ENCODE measurements at regions of chr20 and their contacts with region 1.

Region 1: GRCh38 chr20:35954200-35954906 is at the start of gene SCAND1:
- DNase-seq: peak; percentile 94
- ATAC-seq: peak; percentile 86
- H3K4me3 Mint-ChIP-seq: peak within 1 kb of the TSS; percentile 100
- H3K27ac Mint-ChIP-seq: peak within 1 kb of the TSS; percentile 100
- H3K4me1 Mint-ChIP-seq: peaks cover 22% of the 10 kb centered on the region
- H3K27me3 Mint-ChIP-seq: no peaks in the 10 kb centered on the region
- CTCF ChIP-seq: peak; percentile 48
- total RNA-seq, gene SCAND1: 35.9 and 43.2 TPM in 2 replicates

Region 2: GRCh38 chr20:34876162-34877001 is 1078.0 kb before region 1 on chr20 and contains the start of gene ACSS2:
- CTCF ChIA-PET with region 1: no interaction called
- POLR2A ChIA-PET with region 1: interaction called, 3 read pairs
- intact Hi-C with region 1: loop called (anchors 10 kb)
- DNase-seq: peak; percentile 96
- ATAC-seq: peak; percentile 86
- H3K4me3 Mint-ChIP-seq: peak within 1 kb of the TSS; percentile 86
- H3K27ac Mint-ChIP-seq: peak within 1 kb of the TSS; percentile 25
- H3K4me1 Mint-ChIP-seq: peaks cover 51% of the 10 kb centered on the region
- H3K27me3 Mint-ChIP-seq: no peaks in the 10 kb centered on the region
- CTCF ChIP-seq: no peak
- total RNA-seq, gene ACSS2: 8.4 and 11.3 TPM in 2 replicates

Region 3: GRCh38 chr20:35463455-35464300 is 490.7 kb before region 1 on chr20:
- CTCF ChIA-PET with region 1: interaction called, 3 read pairs
- POLR2A ChIA-PET with region 1: no interaction called
- intact Hi-C with region 1: loop called (anchors 2 kb)
- DNase-seq: no peak
- ATAC-seq: peak; percentile 84
- H3K4me3 Mint-ChIP-seq: no peak overlapping the region
- H3K27ac Mint-ChIP-seq: no peak overlapping the region
- H3K4me1 Mint-ChIP-seq: peaks cover 13% of the 10 kb centered on the region
- H3K27me3 Mint-ChIP-seq: no peaks in the 10 kb centered on the region
- CTCF ChIP-seq: no peak

Region 4: GRCh38 chr20:35741892-35742740 is 212.2 kb before region 1 on chr20 and contains the start of gene RBM39:
- CTCF ChIA-PET with region 1: interaction called, 6 read pairs
- POLR2A ChIA-PET with region 1: interaction called, 104 read pairs
- intact Hi-C with region 1: loop called (anchors 1 kb)
- DNase-seq: peak; percentile 94
- ATAC-seq: peak; percentile 81
- H3K4me3 Mint-ChIP-seq: peak within 1 kb of the TSS; percentile 99
- H3K27ac Mint-ChIP-seq: peak within 1 kb of the TSS; percentile 99
- H3K4me1 Mint-ChIP-seq: peaks cover 46% of the 10 kb centered on the region
- H3K27me3 Mint-ChIP-seq: no peaks in the 10 kb centered on the region
- CTCF ChIP-seq: no peak
- total RNA-seq, gene RBM39: 432 and 483 TPM in 2 replicates

Region 5: DNA sequence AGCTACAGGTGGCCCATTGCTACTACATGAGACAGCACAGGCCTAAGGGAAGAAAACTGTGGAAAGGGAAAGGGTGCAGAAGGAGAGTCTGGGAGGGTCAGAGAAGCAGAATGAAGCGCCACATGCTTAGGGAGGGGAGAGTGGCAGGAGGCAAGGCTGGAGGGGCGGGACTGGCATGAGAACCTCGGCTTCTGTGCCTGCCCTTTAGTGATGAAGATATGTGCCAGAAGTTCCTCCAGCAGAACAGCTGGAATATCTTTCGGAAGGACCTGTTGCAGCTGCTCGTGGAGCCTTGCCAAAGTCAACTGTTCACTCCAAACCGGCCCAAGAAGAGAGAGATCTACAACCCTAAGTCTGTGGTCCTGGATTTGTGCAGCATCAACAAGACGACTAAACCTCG is 75.8 kb after region 1 on chr20:
- CTCF ChIA-PET with region 1: no interaction called
- POLR2A ChIA-PET with region 1: no interaction called
- intact Hi-C with region 1: no loop called
- DNase-seq: no peak
- ATAC-seq: no peak
- H3K4me3 Mint-ChIP-seq: no peak overlapping the region
- H3K27ac Mint-ChIP-seq: no peak overlapping the region
- H3K4me1 Mint-ChIP-seq: no peaks in the 10 kb centered on the region
- H3K27me3 Mint-ChIP-seq: peaks cover 2% of the 10 kb centered on the region
- CTCF ChIP-seq: no peak

Region 6: GRCh38 chr20:36050436-36051317 is 96.3 kb after region 1 on chr20:
- CTCF ChIA-PET with region 1: no interaction called
- POLR2A ChIA-PET with region 1: interaction called, 6 read pairs
- intact Hi-C with region 1: loop called (anchors 1 kb)
- DNase-seq: peak; percentile 80
- ATAC-seq: peak; percentile 94
- H3K4me3 Mint-ChIP-seq: peak overlapping the region; percentile 86
- H3K27ac Mint-ChIP-seq: peak overlapping the region; percentile 91
- H3K4me1 Mint-ChIP-seq: peaks cover 54% of the 10 kb centered on the region
- H3K27me3 Mint-ChIP-seq: no peaks in the 10 kb centered on the region
- CTCF ChIP-seq: no peak

Region 7: GRCh38 chr20:36573103-36573794 is 618.9 kb after region 1 on chr20 and contains the start of gene TGIF2:
- CTCF ChIA-PET with region 1: no interaction called
- POLR2A ChIA-PET with region 1: interaction called, 5 read pairs
- intact Hi-C with region 1: loop called (anchors 1 kb)
- DNase-seq: peak; percentile 92
- ATAC-seq: peak; percentile 77
- H3K4me3 Mint-ChIP-seq: peak within 1 kb of the TSS; percentile 90
- H3K27ac Mint-ChIP-seq: peak within 1 kb of the TSS; percentile 91
- H3K4me1 Mint-ChIP-seq: peaks cover 36% of the 10 kb centered on the region
- H3K27me3 Mint-ChIP-seq: no peaks in the 10 kb centered on the region
- CTCF ChIP-seq: no peak
- total RNA-seq, gene TGIF2: 40.8 and 43.8 TPM in 2 replicates